ENCODE measurements at regions of chr12 and their contacts with region 1.

Region 1: GRCh38 chr12:114662512-114663177 is 21.3 kb downstream of the TBX3 start:
- DNase-seq: peak; percentile 71
- ATAC-seq: 0 out of 3 replicates have a peak, but pooled peaks have one; percentile 20
- H3K4me3 ChIP-seq: no peak overlapping the region
- H3K27ac ChIP-seq: no peak overlapping the region
- H3K4me1 ChIP-seq: peaks cover 53% of the 10 kb centered on the region
- H3K27me3 ChIP-seq: no peaks in the 10 kb centered on the region
- CTCF ChIP-seq: peak; percentile 90
- EP300 ChIP-seq: peak in 1 of 2 experiments; percentile 6; a peak in 1 of 4 replicates
- POLR2A ChIP-seq: no peak
- RAD21 ChIP-seq: peak; percentile 87

Region 2: DNA sequence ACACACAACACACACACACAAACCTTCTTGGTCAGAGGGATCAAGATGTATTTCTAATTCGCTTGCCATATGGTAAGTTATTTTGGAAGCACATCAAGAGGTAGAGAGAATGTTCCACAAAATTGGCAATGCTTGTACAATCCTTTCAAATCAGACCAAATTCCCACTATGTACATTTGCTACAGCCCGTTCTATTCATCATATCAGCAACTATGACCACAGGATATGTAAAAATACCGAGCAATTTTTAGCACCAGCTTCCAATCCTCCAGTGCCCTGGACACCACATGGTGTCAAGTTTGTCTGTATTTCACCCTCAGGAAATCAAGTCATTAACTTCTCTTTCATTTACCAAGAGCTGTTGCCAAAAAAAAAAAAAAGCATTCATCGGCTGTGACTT is 277.9 kb before region 1 on chr12:
- CTCF ChIA-PET with region 1: no interaction called
- POLR2A ChIA-PET with region 1: no interaction called
- in situ Hi-C with region 1: no loop called
- intact Hi-C with region 1: no loop called
- DNase-seq: no peak
- ATAC-seq: no peak
- H3K4me3 ChIP-seq: no peak overlapping the region
- H3K27ac ChIP-seq: no peak overlapping the region
- H3K4me1 ChIP-seq: no peaks in the 10 kb centered on the region
- H3K27me3 ChIP-seq: peaks cover 2 to 4% of the 10 kb centered on the region in 2 experiments; a peak in 1 of 5 replicates
- CTCF ChIP-seq: no peak
- EP300 ChIP-seq: no peak
- POLR2A ChIP-seq: no peak
- RAD21 ChIP-seq: no peak

Region 3: GRCh38 chr12:115166698-115167315 is 504.2 kb after region 1 on chr12:
- CTCF ChIA-PET with region 1: interaction called, 3 read pairs
- POLR2A ChIA-PET with region 1: no interaction called
- in situ Hi-C with region 1: loop called (anchors 10 kb)
- intact Hi-C with region 1: no loop called
- DNase-seq: peak; percentile 18
- ATAC-seq: peak; percentile 32; the same call in 1 of the 3 replicates
- H3K4me3 ChIP-seq: no peak overlapping the region
- H3K27ac ChIP-seq: no peak overlapping the region
- H3K4me1 ChIP-seq: no peaks in the 10 kb centered on the region
- H3K27me3 ChIP-seq: 0 out of 5 replicates have a peak, but pooled peaks cover 0 to 5% of the 10 kb centered on the region in 2 experiments
- CTCF ChIP-seq: peak; percentile 58
- EP300 ChIP-seq: no peak
- POLR2A ChIP-seq: no peak
- RAD21 ChIP-seq: no peak

Region 4: GRCh38 chr12:115451780-115452736 is 789.4 kb after region 1 on chr12:
- CTCF ChIA-PET with region 1: no interaction called
- POLR2A ChIA-PET with region 1: interaction called, 6 read pairs
- in situ Hi-C with region 1: loop called (anchors 25 kb)
- intact Hi-C with region 1: no loop called
- DNase-seq: peak; percentile 66
- ATAC-seq: peak; percentile 89
- H3K4me3 ChIP-seq: peak overlapping the region; percentile 25 to 59 (median 32); a peak in 5 of 6 replicates
- H3K27ac ChIP-seq: peak overlapping the region; percentile 73
- H3K4me1 ChIP-seq: peaks cover 91% of the 10 kb centered on the region
- H3K27me3 ChIP-seq: no peaks in the 10 kb centered on the region
- CTCF ChIP-seq: no peak
- EP300 ChIP-seq: peak; percentile 88; a peak in 3 of 4 replicates
- POLR2A ChIP-seq: no peak
- RAD21 ChIP-seq: peak; percentile 68

Region 5: DNA sequence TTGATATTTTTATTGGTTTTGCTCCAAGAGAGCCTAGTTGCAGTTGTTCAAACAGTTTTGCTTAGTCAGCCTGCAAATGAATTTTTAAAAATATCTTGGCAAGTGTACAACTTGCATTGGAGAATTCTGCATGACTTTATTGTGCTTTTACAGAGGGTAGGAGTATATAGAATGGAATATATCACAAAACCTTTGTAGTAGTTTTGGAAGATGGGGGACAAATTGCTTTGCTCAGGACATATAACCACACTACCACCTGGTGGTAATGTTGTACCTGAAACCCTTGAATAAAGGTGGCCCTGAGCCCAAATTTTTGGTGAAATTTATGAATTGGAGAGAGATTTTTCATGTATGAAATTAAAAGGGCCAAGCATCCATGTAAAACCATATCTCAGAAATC is 969.7 kb after region 1 on chr12:
- CTCF ChIA-PET with region 1: interaction called, 3 read pairs
- POLR2A ChIA-PET with region 1: no interaction called
- in situ Hi-C with region 1: loop called (anchors 10 kb)
- intact Hi-C with region 1: loop called (anchors 5 kb)
- DNase-seq: no peak
- ATAC-seq: no peak
- H3K4me3 ChIP-seq: no peak overlapping the region
- H3K27ac ChIP-seq: no peak overlapping the region
- H3K4me1 ChIP-seq: no peaks in the 10 kb centered on the region
- H3K27me3 ChIP-seq: no peaks in the 10 kb centered on the region; a peak in 2 of 5 replicates
- CTCF ChIP-seq: no peak
- EP300 ChIP-seq: no peak
- POLR2A ChIP-seq: no peak
- RAD21 ChIP-seq: no peak

Region 6: GRCh38 chr12:115752913-115753726 is 1090.5 kb after region 1 on chr12:
- CTCF ChIA-PET with region 1: interaction called, 15 read pairs
- POLR2A ChIA-PET with region 1: no interaction called
- in situ Hi-C with region 1: loop called (anchors 5 kb)
- intact Hi-C with region 1: loop called (anchors 1 kb)
- DNase-seq: peak; percentile 58
- ATAC-seq: peak; percentile 82
- H3K4me3 ChIP-seq: no peak overlapping the region
- H3K27ac ChIP-seq: no peak overlapping the region
- H3K4me1 ChIP-seq: peaks cover 8% of the 10 kb centered on the region; the same call in 1 of the 2 replicates
- H3K27me3 ChIP-seq: peaks cover 0 to 16% of the 10 kb centered on the region in 2 experiments; a peak in 3 of 5 replicates
- CTCF ChIP-seq: peak; percentile 79
- EP300 ChIP-seq: no peak
- POLR2A ChIP-seq: no peak
- RAD21 ChIP-seq: peak; percentile 59; the same call in 1 of the 2 replicates

Region 7: GRCh38 chr12:115916910-115917668 is 1254.4 kb after region 1 on chr12:
- CTCF ChIA-PET with region 1: interaction called, 3 read pairs
- POLR2A ChIA-PET with region 1: no interaction called
- in situ Hi-C with region 1: loop called (anchors 25 kb)
- intact Hi-C with region 1: loop called (anchors 5 kb)
- DNase-seq: peak; percentile 13
- ATAC-seq: peak; percentile 95
- H3K4me3 ChIP-seq: peak overlapping the region in 1 of 3 experiments; percentile 46; a peak in 1 of 6 replicates
- H3K27ac ChIP-seq: no peak overlapping the region
- H3K4me1 ChIP-seq: peaks cover 20% of the 10 kb centered on the region
- H3K27me3 ChIP-seq: no peaks in the 10 kb centered on the region
- CTCF ChIP-seq: peak; percentile 94
- EP300 ChIP-seq: no peak
- POLR2A ChIP-seq: no peak
- RAD21 ChIP-seq: peak; percentile 96

Measured in HepG2 (cell line).